Ascending aorta (tissue), 2 donors: ENCODE measurements at regions of chr6 and their contacts with region 1.

Region 1: GRCh38 chr6:84618046-84618752 is 146.2 kb downstream of the TBX18 start:
- DNase-seq: peak in 1 of 2 donors; percentile 77
- H3K4me3 ChIP-seq: peak overlapping the region; percentile 28 to 29
- H3K27ac ChIP-seq: peak overlapping the region; percentile 90 to 92
- H3K4me1 ChIP-seq: peaks cover 0 to 12% of the 10 kb centered on the region in 2 donors
- H3K27me3 ChIP-seq: no peaks in the 10 kb centered on the region
- CTCF ChIP-seq: no peak

Region 2: GRCh38 chr6:84515067-84515466 is 103.1 kb before region 1 on chr6:
- intact Hi-C with region 1: loop called (anchors 5 kb)
- DNase-seq: no peak
- H3K4me3 ChIP-seq: peak overlapping the region in 1 of 2 donors; percentile 28
- H3K27ac ChIP-seq: peak overlapping the region; percentile 68 to 73
- H3K4me1 ChIP-seq: peaks cover 0 to 29% of the 10 kb centered on the region in 2 donors
- H3K27me3 ChIP-seq: no peaks in the 10 kb centered on the region
- CTCF ChIP-seq: no peak

Region 3: GRCh38 chr6:84667252-84668213 is 49.3 kb after region 1 on chr6:
- intact Hi-C with region 1: loop called (anchors 10 kb)
- DNase-seq: no peak
- H3K4me3 ChIP-seq: no peak overlapping the region
- H3K27ac ChIP-seq: no peak overlapping the region
- H3K4me1 ChIP-seq: peaks cover 0 to 10% of the 10 kb centered on the region in 2 donors
- H3K27me3 ChIP-seq: no peaks in the 10 kb centered on the region
- CTCF ChIP-seq: no peak

Region 4: DNA sequence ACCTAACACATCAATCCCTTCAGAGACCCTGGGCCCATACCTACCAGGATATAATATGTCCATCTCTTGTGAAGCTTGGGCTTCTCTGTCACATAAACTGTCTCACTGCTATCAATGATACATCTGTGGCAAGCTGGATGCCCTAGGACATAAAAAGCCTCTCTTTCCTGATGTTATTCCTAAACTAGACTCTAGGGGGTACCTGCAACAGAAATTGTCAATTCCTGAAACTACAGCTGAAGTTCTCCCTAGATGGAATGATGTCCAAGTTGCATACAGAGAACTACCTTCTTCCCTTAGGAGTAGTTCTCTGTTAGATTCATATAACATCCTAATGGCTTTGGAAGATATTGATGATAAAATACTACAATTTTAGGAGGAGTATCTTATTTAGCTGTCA is 110.4 kb after region 1 on chr6:
- intact Hi-C with region 1: no loop called
- DNase-seq: no peak
- H3K4me3 ChIP-seq: no peak overlapping the region
- H3K27ac ChIP-seq: no peak overlapping the region
- H3K4me1 ChIP-seq: peaks cover 0 to 2% of the 10 kb centered on the region in 2 donors
- H3K27me3 ChIP-seq: no peaks in the 10 kb centered on the region
- CTCF ChIP-seq: peak in 1 of 3 experiments; percentile 7

Region 5: GRCh38 chr6:84764332-84765049 is 146.3 kb after region 1 on chr6 and contains the start of gene TBX18:
- intact Hi-C with region 1: loop called (anchors 5 kb)
- DNase-seq: peak; percentile 94 to 99
- H3K4me3 ChIP-seq: peak within 1 kb of the TSS; percentile 56 to 100
- H3K27ac ChIP-seq: peak within 1 kb of the TSS; percentile 98 to 100
- H3K4me1 ChIP-seq: no peaks in the 10 kb centered on the region
- H3K27me3 ChIP-seq: no peaks in the 10 kb centered on the region
- CTCF ChIP-seq: no peak
- total RNA-seq, gene TBX18: 81.0 TPM

Region 6: GRCh38 chr6:84815896-84816735 is 197.9 kb after region 1 on chr6:
- intact Hi-C with region 1: no loop called
- DNase-seq: no peak
- H3K4me3 ChIP-seq: no peak overlapping the region
- H3K27ac ChIP-seq: no peak overlapping the region
- H3K4me1 ChIP-seq: no peaks in the 10 kb centered on the region
- H3K27me3 ChIP-seq: no peaks in the 10 kb centered on the region
- CTCF ChIP-seq: no peak